Caco-2 (cell line): ENCODE measurements at regions of chr20 and their contacts with region 1.

Region 1: GRCh38 chr20:53594068-53595017 is 704 bp upstream of the ZNF217 start:
- DNase-seq: peak; percentile 99 to 100
- H3K4me3 ChIP-seq: peak overlapping the region; percentile 98
- H3K4me3 Mint-ChIP-seq: peak overlapping the region; percentile 87
- H3K27ac Mint-ChIP-seq: peak overlapping the region; percentile 80
- H3K4me1 ChIP-seq: peaks cover 38% of the 10 kb centered on the region
- H3K4me1 Mint-ChIP-seq: peaks cover 44% of the 10 kb centered on the region
- H3K27me3 ChIP-seq: no peaks in the 10 kb centered on the region
- H3K27me3 Mint-ChIP-seq: no peaks in the 10 kb centered on the region
- CTCF ChIP-seq: peak; percentile 64 to 79

Region 2: DNA sequence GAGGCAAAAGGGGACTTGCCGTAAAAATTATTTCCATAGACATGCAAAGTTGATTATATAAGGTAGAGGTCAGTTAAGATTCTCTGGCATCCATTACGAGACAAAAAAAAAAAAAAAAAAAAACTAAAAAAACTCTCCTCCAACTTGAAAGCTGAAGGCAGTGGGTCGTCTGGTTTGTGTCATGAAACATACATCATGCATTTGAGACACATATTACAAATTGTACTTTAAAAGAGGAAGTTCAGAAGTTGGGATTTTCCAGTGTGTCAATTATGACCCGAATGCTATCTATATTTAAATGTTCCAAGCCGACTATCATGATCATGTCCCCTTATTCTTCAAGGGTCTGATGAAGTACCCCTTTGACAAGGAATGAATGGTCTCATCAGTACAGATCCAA is 125.8 kb before region 1 on chr20:
- CTCF ChIA-PET with region 1: no interaction called
- POLR2A ChIA-PET with region 1: no interaction called
- intact Hi-C with region 1: no loop called
- DNase-seq: no peak
- H3K4me3 ChIP-seq: no peak overlapping the region
- H3K4me3 Mint-ChIP-seq: no peak overlapping the region
- H3K27ac Mint-ChIP-seq: no peak overlapping the region
- H3K4me1 ChIP-seq: no peaks in the 10 kb centered on the region
- H3K4me1 Mint-ChIP-seq: no peaks in the 10 kb centered on the region
- H3K27me3 ChIP-seq: no peaks in the 10 kb centered on the region
- H3K27me3 Mint-ChIP-seq: no peaks in the 10 kb centered on the region
- CTCF ChIP-seq: no peak

Region 3: GRCh38 chr20:53652090-53652858 is 57.9 kb after region 1 on chr20:
- CTCF ChIA-PET with region 1: interaction called, 4 read pairs
- POLR2A ChIA-PET with region 1: interaction called, 3 read pairs
- intact Hi-C with region 1: loop called (anchors 2 kb)
- DNase-seq: peak; percentile 41 to 66
- H3K4me3 ChIP-seq: peak overlapping the region; percentile 14; the same call in 1 of the 2 replicates
- H3K4me3 Mint-ChIP-seq: peak overlapping the region; percentile 61
- H3K27ac Mint-ChIP-seq: peak overlapping the region; percentile 40
- H3K4me1 ChIP-seq: peaks cover 40% of the 10 kb centered on the region
- H3K4me1 Mint-ChIP-seq: peaks cover 35% of the 10 kb centered on the region
- H3K27me3 ChIP-seq: no peaks in the 10 kb centered on the region
- H3K27me3 Mint-ChIP-seq: no peaks in the 10 kb centered on the region
- CTCF ChIP-seq: no peak